K562 (cell line): ENCODE measurements at regions of chr2 and their contacts with region 1.

Region 1: DNA sequence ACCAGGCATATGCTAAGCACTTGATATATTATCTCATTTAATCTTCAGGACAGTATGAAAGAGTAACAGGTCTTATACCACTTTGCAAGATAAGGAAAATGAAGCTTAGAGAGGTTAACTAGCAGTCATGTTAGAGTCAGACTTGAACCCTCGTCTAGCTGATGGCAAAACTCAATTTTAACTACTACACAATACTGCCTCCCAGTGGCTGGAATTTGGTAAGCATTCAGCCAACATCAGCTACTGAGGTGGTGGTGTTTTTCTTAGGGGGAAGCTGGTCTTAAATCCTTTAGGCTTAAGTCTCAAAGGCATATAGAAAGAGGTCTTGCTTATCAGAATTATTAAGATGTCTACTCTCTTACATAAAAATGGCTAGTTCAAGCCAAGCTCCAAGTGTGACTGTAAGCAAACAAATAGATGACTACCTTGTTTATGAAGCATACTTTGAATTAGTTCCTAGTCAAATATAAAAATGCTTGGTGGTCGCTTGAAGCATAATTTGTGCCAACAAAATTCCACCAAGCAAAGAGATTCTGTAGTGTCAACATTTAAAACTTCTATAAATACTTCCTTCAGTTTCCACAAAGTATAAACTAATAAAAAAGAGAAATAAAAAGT is 325.4 kb upstream of the FIGN start:
- DNase-seq: peak; percentile 3 to 18 (median 10)
- ATAC-seq: no peak
- H3K4me3 ChIP-seq: no peak overlapping the region
- H3K27ac ChIP-seq: no peak overlapping the region
- H3K4me1 ChIP-seq: no peaks in the 10 kb centered on the region
- H3K27me3 ChIP-seq: no peaks in the 10 kb centered on the region; a peak in 1 of 5 replicates
- CTCF ChIP-seq: peak in 2 of 3 experiments; percentile 30 to 35; a peak in 2 of 6 replicates
- EP300 ChIP-seq: no peak
- POLR2A ChIP-seq: no peak
- RAD21 ChIP-seq: peak in 1 of 2 experiments; percentile 33; a peak in 2 of 4 replicates

Region 2: DNA sequence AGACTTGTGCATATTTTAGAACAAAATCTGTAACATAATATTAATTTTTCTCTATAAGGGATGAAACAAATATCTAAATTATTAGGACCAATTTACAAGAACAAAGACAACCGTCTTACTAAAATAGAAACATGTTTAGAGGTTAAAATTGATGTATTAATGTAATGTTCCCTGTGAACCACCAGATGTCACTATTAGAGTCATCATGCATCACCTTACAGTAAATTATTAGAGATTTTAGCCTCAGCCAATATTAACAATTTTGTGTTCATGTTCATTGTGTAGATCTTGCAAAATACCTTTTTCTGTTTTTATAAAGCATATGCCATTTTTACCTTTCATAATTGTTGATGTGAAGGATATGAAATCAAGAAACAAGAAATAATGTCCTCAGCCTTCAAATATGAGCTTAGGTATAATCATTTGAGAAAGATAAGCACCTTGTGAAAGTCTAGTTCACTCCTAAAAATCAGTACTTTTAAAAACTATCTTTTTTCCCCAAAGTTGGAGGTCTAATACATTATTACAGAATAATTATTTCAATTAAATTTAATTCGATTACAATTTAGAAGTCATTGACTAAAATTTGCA is 878.4 kb before region 1 on chr2:
- CTCF ChIA-PET with region 1: no interaction called
- POLR2A ChIA-PET with region 1: no interaction called
- in situ Hi-C with region 1: no loop called
- intact Hi-C with region 1: loop called (anchors 5 kb)
- DNase-seq: peak in 2 of 4 experiments; percentile 9 to 10
- ATAC-seq: no peak
- H3K4me3 ChIP-seq: no peak overlapping the region
- H3K27ac ChIP-seq: no peak overlapping the region
- H3K4me1 ChIP-seq: no peaks in the 10 kb centered on the region
- H3K27me3 ChIP-seq: no peaks in the 10 kb centered on the region
- CTCF ChIP-seq: peak in 1 of 3 experiments; percentile 42; a peak in 2 of 6 replicates
- EP300 ChIP-seq: no peak
- POLR2A ChIP-seq: no peak
- RAD21 ChIP-seq: peak; percentile 18 to 57

Region 3: DNA sequence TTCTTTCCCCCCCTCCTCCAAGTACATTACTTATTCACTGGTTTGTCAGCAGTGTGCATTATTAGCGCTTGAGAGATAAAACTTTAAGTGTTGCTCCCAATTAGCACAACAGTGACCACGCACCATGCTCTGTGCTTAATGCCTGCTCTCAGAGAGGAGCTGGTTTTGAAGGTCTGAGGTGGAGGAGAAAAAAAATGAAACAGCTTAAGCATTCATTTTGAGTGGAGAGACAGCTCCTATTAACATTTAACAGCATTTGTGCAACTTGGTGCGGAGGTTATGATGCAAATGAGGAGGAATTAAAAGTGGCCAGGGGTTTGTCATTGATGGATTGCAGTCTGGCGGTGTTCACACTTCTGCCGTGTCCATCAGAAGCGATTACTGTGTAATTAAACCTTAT is 467.3 kb before region 1 on chr2:
- CTCF ChIA-PET with region 1: no interaction called
- POLR2A ChIA-PET with region 1: no interaction called
- in situ Hi-C with region 1: no loop called
- intact Hi-C with region 1: no loop called
- DNase-seq: no peak
- ATAC-seq: no peak
- H3K4me3 ChIP-seq: no peak overlapping the region
- H3K27ac ChIP-seq: no peak overlapping the region
- H3K4me1 ChIP-seq: no peaks in the 10 kb centered on the region
- H3K27me3 ChIP-seq: no peaks in the 10 kb centered on the region
- CTCF ChIP-seq: no peak
- EP300 ChIP-seq: no peak
- POLR2A ChIP-seq: no peak
- RAD21 ChIP-seq: no peak

Region 4: DNA sequence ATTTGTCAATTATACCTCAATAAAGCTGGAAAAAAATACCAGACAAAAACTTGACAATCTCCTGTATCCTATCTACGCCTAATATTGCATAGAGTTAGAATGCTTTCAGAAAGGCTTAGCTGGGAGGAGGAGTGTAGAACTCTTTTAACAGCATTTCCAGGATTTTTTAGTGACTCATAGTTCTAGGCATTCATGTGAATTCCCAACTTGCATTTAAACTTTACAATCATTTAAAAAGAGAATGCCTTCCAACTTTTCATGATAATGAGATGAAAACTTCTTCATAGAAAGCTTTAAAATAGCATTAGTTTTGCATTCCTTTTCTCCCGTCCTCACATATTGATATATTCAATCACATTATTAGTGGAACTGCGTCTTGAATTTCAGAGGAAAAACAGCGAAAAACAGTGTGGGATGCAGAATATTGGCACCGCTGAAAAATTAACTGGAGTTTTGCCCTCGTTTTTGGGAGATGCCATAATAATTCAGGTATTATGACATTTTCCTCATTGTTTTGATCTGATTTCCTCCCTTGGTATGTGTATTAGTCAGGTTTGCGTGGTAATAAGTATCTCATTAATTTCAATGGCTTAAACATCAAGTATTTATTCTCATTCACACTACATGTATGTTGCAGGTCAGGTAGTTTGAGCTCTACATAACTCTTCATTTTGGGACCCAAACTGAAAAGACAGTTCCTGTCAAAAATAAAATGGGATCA is 32.3 kb before region 1 on chr2:
- CTCF ChIA-PET with region 1: no interaction called
- POLR2A ChIA-PET with region 1: no interaction called
- in situ Hi-C with region 1: no loop called
- intact Hi-C with region 1: no loop called
- DNase-seq: no peak
- ATAC-seq: no peak
- H3K4me3 ChIP-seq: no peak overlapping the region
- H3K27ac ChIP-seq: no peak overlapping the region
- H3K4me1 ChIP-seq: no peaks in the 10 kb centered on the region
- H3K27me3 ChIP-seq: no peaks in the 10 kb centered on the region
- CTCF ChIP-seq: no peak
- EP300 ChIP-seq: no peak
- POLR2A ChIP-seq: no peak
- RAD21 ChIP-seq: no peak

Region 5: GRCh38 chr2:164198256-164198655 is 137.0 kb after region 1 on chr2:
- CTCF ChIA-PET with region 1: no interaction called
- POLR2A ChIA-PET with region 1: no interaction called
- in situ Hi-C with region 1: no loop called
- intact Hi-C with region 1: no loop called
- DNase-seq: no peak
- ATAC-seq: no peak
- H3K4me3 ChIP-seq: no peak overlapping the region
- H3K27ac ChIP-seq: no peak overlapping the region
- H3K4me1 ChIP-seq: no peaks in the 10 kb centered on the region
- H3K27me3 ChIP-seq: no peaks in the 10 kb centered on the region
- CTCF ChIP-seq: no peak
- EP300 ChIP-seq: no peak
- POLR2A ChIP-seq: no peak
- RAD21 ChIP-seq: no peak

Region 6: DNA sequence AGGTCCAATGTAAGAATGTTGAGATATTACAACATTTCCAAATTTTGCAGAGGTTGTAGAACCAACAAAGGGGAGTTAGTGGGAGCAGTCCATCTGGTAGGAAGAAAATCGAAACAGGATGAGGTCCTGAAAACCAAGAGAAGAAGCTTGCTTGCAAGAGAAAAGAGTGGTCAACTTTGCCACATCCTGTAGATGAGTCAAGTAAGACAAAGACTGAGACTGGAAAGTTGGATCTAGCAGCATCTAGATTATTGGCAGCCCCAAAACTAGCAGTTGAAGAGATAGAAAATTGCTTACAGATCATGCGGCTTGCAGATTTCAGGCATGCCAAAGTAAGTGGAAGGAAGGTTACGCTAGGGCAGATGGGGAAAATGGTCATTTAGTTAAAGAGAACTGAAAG is 181.2 kb after region 1 on chr2:
- CTCF ChIA-PET with region 1: no interaction called
- POLR2A ChIA-PET with region 1: no interaction called
- in situ Hi-C with region 1: no loop called
- intact Hi-C with region 1: no loop called
- DNase-seq: no peak
- ATAC-seq: no peak
- H3K4me3 ChIP-seq: no peak overlapping the region
- H3K27ac ChIP-seq: no peak overlapping the region
- H3K4me1 ChIP-seq: no peaks in the 10 kb centered on the region
- H3K27me3 ChIP-seq: no peaks in the 10 kb centered on the region
- CTCF ChIP-seq: no peak
- EP300 ChIP-seq: no peak
- POLR2A ChIP-seq: no peak
- RAD21 ChIP-seq: no peak